ENCODE measurements at regions of chr10 and their contacts with region 1.

Region 1: DNA sequence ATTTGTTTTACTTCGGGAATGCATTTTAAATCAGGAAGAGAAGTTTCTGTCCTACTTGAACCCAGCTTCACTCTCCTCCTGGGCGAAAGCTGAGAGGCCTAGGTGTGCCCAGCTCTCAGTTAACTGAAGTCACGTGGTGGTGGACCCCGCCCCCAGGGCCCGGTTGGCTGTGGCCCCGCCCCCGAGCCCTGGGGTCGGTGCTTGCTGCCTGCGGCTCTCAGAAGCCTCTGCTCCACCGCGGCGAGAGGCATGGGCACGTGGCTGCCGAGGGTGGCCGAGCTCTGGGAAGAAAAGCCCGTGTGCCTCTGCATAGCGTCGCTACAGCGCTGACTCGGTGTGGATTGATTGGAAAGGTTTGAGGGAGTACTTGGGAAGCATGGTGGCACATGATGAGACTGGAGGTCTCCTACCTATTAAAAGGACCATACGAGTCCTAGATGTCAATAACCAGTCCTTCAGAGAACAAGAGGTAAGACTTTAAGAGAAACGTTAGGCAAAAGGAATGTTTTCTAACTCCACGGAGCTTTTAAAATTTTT is 34.1 kb downstream of the NET1 start:
- DNase-seq: no peak
- ATAC-seq: no peak
- H3K4me3 ChIP-seq: peak overlapping the region; percentile 18; the same call in 1 of the 2 replicates
- H3K27ac ChIP-seq: no peak overlapping the region
- H3K4me1 ChIP-seq: peaks cover 42% of the 10 kb centered on the region
- H3K27me3 ChIP-seq: no peaks in the 10 kb centered on the region
- CTCF ChIP-seq: no peak
- EP300 ChIP-seq: no peak
- POLR2A ChIP-seq: peak; percentile 87
- RAD21 ChIP-seq: no peak

Region 2: DNA sequence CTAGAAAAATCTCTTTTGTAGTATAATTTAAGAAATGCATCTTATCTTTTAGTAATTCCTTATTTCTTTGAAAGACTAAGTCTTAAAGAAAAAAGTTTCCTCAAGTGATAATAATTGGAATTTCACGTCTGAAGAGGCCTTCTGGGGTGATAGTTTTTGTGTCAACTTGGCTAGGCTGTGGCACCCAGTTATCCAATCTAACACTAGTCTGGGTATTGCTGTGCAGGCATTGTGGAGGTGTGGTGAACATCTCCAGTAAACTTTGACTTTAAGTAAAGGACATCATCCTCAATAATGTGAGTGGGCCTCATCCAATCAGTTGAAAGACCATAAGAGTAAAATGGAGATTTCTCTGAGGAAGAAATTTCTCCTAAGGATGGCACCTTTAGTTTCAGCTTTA is 39.5 kb before region 1 on chr10:
- CTCF ChIA-PET with region 1: no interaction called
- POLR2A ChIA-PET with region 1: no interaction called
- RAD21 ChIA-PET with region 1: no interaction called
- SMC1A ChIA-PET with region 1: no interaction called
- in situ Hi-C with region 1: no loop called
- intact Hi-C with region 1: no loop called
- DNase-seq: no peak
- ATAC-seq: no peak
- H3K4me3 ChIP-seq: no peak overlapping the region
- H3K27ac ChIP-seq: no peak overlapping the region
- H3K4me1 ChIP-seq: no peaks in the 10 kb centered on the region
- H3K27me3 ChIP-seq: peaks cover 0 to 6% of the 10 kb centered on the region in 2 experiments; a peak in 1 of 4 replicates
- CTCF ChIP-seq: no peak
- EP300 ChIP-seq: no peak
- POLR2A ChIP-seq: no peak
- RAD21 ChIP-seq: no peak

Region 3: GRCh38 chr10:5423771-5424170 is 22.7 kb before region 1 on chr10:
- CTCF ChIA-PET with region 1: interaction called, 12 read pairs
- POLR2A ChIA-PET with region 1: interaction called, 3 read pairs
- RAD21 ChIA-PET with region 1: no interaction called
- SMC1A ChIA-PET with region 1: interaction called, 19 read pairs
- in situ Hi-C with region 1: no loop called
- intact Hi-C with region 1: no loop called
- DNase-seq: no peak
- ATAC-seq: no peak
- H3K4me3 ChIP-seq: no peak overlapping the region
- H3K27ac ChIP-seq: no peak overlapping the region
- H3K4me1 ChIP-seq: no peaks in the 10 kb centered on the region
- H3K27me3 ChIP-seq: no peaks in the 10 kb centered on the region
- CTCF ChIP-seq: no peak
- EP300 ChIP-seq: no peak
- POLR2A ChIP-seq: no peak
- RAD21 ChIP-seq: no peak

Region 4: GRCh38 chr10:5583525-5584175 is 137.2 kb after region 1 on chr10:
- CTCF ChIA-PET with region 1: interaction called, 26 read pairs
- POLR2A ChIA-PET with region 1: no interaction called
- RAD21 ChIA-PET with region 1: interaction called, 11 read pairs
- SMC1A ChIA-PET with region 1: interaction called, 12 read pairs
- in situ Hi-C with region 1: loop called (anchors 5 kb)
- intact Hi-C with region 1: loop called (anchors 1 kb)
- DNase-seq: peak; percentile 37
- ATAC-seq: peak; percentile 73
- H3K4me3 ChIP-seq: 0 out of 2 replicates have a peak overlapping the region, but pooled peaks have one; percentile 3
- H3K27ac ChIP-seq: peak overlapping the region; percentile 28
- H3K4me1 ChIP-seq: peaks cover 51% of the 10 kb centered on the region
- H3K27me3 ChIP-seq: peaks cover 0 to 1% of the 10 kb centered on the region in 2 experiments; a peak in 2 of 4 replicates
- CTCF ChIP-seq: no peak
- EP300 ChIP-seq: peak; percentile 66 to 67; a peak in 3 of 4 replicates
- POLR2A ChIP-seq: no peak
- RAD21 ChIP-seq: no peak

Region 5: GRCh38 chr10:5623081-5623748 is 176.8 kb after region 1 on chr10:
- CTCF ChIA-PET with region 1: interaction called, 535 read pairs
- POLR2A ChIA-PET with region 1: interaction called, 6 read pairs
- RAD21 ChIA-PET with region 1: interaction called, 136 read pairs
- SMC1A ChIA-PET with region 1: interaction called, 129 read pairs
- in situ Hi-C with region 1: loop called (anchors 5 kb)
- intact Hi-C with region 1: loop called (anchors 1 kb)
- DNase-seq: peak; percentile 23
- ATAC-seq: peak; percentile 99
- H3K4me3 ChIP-seq: no peak overlapping the region
- H3K27ac ChIP-seq: no peak overlapping the region
- H3K4me1 ChIP-seq: no peaks in the 10 kb centered on the region
- H3K27me3 ChIP-seq: peaks cover 2 to 9% of the 10 kb centered on the region in 2 experiments; a peak in 3 of 4 replicates
- CTCF ChIP-seq: peak; percentile 87 to 93 (median 89)
- EP300 ChIP-seq: no peak
- POLR2A ChIP-seq: no peak
- RAD21 ChIP-seq: peak; percentile 91

Region 6: DNA sequence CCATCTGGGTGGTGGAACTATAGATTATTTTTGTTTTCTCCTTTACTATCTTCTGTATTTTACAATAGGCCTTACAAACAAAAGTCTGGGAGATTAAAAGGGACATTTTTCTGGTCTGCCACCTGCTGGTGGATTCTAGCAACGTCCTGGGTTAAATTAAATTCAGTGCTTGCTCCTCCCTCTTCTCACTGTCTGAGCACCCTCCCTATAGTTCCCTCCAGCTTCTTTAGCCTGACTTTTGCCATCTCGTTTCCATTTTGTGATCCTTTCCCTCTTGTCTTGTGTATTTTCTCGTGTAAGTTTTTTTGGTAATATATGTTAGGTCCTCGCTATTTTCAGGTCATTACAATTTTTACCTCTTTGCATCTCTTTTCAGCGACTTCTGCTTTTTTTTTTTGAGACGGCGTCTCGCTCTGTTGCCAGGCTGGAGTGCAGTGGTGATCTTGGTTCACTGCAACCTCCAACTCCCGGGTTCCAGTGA is 427.1 kb after region 1 on chr10:
- CTCF ChIA-PET with region 1: interaction called, 3 read pairs
- POLR2A ChIA-PET with region 1: no interaction called
- RAD21 ChIA-PET with region 1: no interaction called
- SMC1A ChIA-PET with region 1: no interaction called
- in situ Hi-C with region 1: loop called (anchors 5 kb)
- intact Hi-C with region 1: loop called (anchors 10 kb)
- DNase-seq: peak; percentile 59
- ATAC-seq: peak; percentile 98
- H3K4me3 ChIP-seq: peak overlapping the region; percentile 26; the same call in 1 of the 2 replicates
- H3K27ac ChIP-seq: 0 out of 2 replicates have a peak overlapping the region, but pooled peaks have one; percentile 18
- H3K4me1 ChIP-seq: peaks cover 3% of the 10 kb centered on the region
- H3K27me3 ChIP-seq: no peaks in the 10 kb centered on the region
- CTCF ChIP-seq: peak; percentile 64 to 73 (median 66)
- EP300 ChIP-seq: no peak
- POLR2A ChIP-seq: no peak
- RAD21 ChIP-seq: peak; percentile 71